Calu3 (cell line): ENCODE measurements at regions of chr14 and their contacts with region 1.

Region 1: DNA sequence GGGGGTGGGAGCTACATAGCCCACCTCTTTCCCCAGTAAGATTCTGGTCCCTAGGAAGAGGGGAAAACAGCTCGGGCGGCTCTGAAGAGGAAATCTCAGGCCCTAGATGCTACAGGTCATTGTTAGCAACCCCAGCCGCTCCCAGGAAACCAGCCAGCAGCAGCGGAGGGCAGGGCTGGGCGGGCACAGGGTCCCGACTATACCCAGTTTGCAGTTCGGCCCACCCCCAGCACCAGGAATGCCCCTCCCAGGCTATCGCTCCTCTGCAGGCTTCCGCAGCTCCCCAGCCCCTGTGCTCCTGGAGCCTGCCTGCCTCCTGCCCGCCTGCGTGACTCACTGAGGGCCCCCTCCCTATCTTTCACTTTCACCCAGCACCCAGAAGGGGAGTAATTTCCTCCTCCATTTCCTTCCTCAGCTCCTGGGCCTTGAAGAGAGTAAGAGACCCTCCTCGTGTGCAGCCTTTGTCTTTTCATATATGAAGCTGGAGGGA is 27.2 kb upstream of the PNMA1 start:
- DNase-seq: peak; percentile 83
- H3K4me3 Mint-ChIP-seq: peak overlapping the region; percentile 57
- H3K27ac Mint-ChIP-seq: peak overlapping the region; percentile 94
- H3K4me1 Mint-ChIP-seq: peaks cover 42% of the 10 kb centered on the region
- H3K27me3 Mint-ChIP-seq: no peaks in the 10 kb centered on the region
- CTCF ChIP-seq: no peak

Region 2: DNA sequence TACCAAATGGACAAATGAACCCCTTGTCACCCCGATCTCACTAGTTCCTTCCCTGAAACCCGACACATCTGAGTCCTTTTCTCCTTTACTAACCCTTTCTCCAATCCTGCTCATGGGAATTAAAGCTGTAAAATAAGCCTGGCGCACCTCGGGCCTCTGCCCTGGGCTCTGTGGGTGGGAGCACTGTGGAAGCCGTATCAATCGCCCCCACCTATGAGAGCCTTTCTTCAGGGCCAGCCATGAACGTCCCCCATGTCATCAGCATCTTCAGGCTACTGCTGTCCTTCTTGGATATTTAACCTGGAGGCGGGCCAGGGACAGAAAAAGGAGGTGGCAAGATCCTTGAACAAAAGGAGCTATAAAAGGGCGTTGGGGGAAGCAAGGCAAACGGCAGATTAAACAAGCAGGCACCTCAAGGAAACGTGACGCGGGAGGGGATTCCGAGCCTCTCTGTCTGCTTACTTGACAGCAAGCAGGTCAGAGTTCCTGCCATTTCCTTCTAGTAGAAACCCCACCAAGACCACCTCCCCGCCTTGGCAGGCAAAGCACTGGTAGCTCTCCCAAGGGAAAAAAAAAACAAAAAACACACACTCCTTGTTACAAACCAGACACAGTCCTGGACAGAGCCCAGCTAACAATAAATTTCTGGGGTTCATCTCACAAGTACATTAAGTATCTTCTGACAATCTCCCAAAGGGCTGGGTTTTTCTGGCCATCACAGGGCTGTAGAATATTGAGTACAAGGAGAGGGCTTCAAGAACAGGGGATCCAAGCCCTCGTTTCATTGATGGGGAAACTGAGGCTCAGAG is 910.4 kb before region 1 on chr14:
- CTCF ChIA-PET with region 1: no interaction called
- intact Hi-C with region 1: no loop called
- DNase-seq: no peak
- H3K4me3 Mint-ChIP-seq: no peak overlapping the region
- H3K27ac Mint-ChIP-seq: no peak overlapping the region
- H3K4me1 Mint-ChIP-seq: no peaks in the 10 kb centered on the region
- H3K27me3 Mint-ChIP-seq: peaks cover 27% of the 10 kb centered on the region
- CTCF ChIP-seq: no peak

Region 3: GRCh38 chr14:73753959-73754882 is 12.8 kb after region 1 on chr14:
- CTCF ChIA-PET with region 1: interaction called, 23 read pairs
- intact Hi-C with region 1: loop called (anchors 2 kb)
- DNase-seq: no peak
- H3K4me3 Mint-ChIP-seq: peak overlapping the region; percentile 73
- H3K27ac Mint-ChIP-seq: peak overlapping the region; percentile 91
- H3K4me1 Mint-ChIP-seq: peaks cover 72% of the 10 kb centered on the region
- H3K27me3 Mint-ChIP-seq: no peaks in the 10 kb centered on the region
- CTCF ChIP-seq: no peak

Region 4: DNA sequence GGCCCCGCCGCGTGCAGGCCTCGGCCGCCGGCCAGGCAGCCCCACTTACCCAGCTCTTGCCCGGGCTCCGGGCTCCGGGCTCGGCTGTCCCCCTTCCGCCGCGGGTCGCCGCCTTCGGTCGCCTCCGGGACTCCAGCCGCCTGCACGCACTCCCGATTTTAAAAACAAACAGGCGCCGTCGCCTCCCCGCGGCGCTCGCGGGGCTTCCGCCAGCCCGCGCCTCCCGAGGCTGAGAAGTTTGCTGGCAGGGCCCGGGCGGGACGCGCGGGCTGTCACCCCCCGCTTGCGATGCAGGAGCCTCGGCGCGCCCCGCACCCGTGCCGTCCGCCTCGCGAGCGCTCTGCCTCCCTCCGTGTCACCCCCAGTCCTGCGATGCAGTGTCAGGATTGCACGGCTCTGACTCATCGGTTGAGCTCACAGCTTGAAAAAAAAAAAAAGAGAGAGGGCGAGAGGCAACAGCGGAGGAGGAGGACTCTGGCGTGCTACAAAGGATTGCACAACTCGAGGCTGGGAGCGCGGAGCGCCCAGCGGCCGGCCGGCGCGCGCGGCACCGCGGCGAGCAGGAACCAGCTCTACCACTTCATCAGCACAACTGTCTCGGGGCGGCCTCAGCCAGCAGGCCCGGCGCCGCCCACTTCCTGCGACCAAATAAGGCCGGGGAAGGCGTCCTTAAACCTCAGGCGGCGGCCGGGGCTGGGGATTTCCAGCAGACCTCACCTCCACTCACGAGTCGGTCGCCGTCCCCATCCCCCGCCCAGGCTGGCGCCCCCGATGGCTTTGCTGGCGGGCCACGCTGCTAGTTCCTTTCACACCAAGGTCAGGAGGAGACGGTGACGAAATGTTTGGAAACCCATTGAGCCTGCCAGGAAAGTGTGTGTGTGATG is 18.5 kb after region 1 on chr14:
- CTCF ChIA-PET with region 1: interaction called, 23 read pairs
- intact Hi-C with region 1: loop called (anchors 2 kb)
- DNase-seq: peak; percentile 97
- H3K4me3 Mint-ChIP-seq: peak overlapping the region; percentile 73
- H3K27ac Mint-ChIP-seq: peak overlapping the region; percentile 94
- H3K4me1 Mint-ChIP-seq: peaks cover 76% of the 10 kb centered on the region
- H3K27me3 Mint-ChIP-seq: no peaks in the 10 kb centered on the region
- CTCF ChIP-seq: no peak

Region 5: GRCh38 chr14:73795972-73796371 is 54.5 kb after region 1 on chr14:
- CTCF ChIA-PET with region 1: no interaction called
- intact Hi-C with region 1: no loop called
- DNase-seq: peak; percentile 82
- H3K4me3 Mint-ChIP-seq: no peak overlapping the region
- H3K27ac Mint-ChIP-seq: no peak overlapping the region
- H3K4me1 Mint-ChIP-seq: peaks cover 32% of the 10 kb centered on the region
- H3K27me3 Mint-ChIP-seq: no peaks in the 10 kb centered on the region
- CTCF ChIP-seq: no peak

Region 6: DNA sequence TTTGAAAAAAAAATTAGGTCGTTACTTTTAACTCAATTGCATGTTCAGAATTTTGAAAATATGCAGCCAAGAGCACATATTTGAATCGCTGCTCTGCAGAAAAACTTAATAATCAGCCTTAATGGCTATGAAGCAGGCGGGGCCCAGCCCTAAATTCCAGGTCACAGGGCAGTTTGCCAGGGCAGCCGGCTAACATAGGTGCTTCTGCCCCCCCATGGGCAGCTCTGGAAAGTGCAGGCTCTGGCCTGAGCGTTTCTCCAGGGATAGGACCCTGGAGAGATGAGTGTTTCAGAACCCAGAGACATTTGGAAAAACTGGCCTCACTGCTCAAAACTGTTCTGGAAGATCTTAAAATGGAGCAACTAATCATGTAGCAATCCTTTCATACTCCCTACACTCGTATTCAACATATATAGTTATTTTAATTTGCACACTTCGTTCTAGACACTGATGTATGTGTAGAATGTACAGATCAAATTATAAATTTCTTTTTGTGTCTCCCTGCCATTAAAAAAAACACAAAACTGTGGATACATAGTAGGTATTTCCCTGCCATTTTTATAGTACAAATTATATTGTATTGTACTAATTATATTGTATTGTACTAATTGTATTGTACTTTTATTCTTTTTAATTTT is 84.2 kb after region 1 on chr14:
- CTCF ChIA-PET with region 1: interaction called, 8 read pairs
- intact Hi-C with region 1: loop called (anchors 5 kb)
- DNase-seq: peak; percentile 89
- H3K4me3 Mint-ChIP-seq: no peak overlapping the region
- H3K27ac Mint-ChIP-seq: no peak overlapping the region
- H3K4me1 Mint-ChIP-seq: peaks cover 11% of the 10 kb centered on the region
- H3K27me3 Mint-ChIP-seq: no peaks in the 10 kb centered on the region
- CTCF ChIP-seq: peak; percentile 77

Region 7: GRCh38 chr14:73935666-73936065 is 194.2 kb after region 1 on chr14:
- CTCF ChIA-PET with region 1: no interaction called
- intact Hi-C with region 1: no loop called
- DNase-seq: no peak
- H3K4me3 Mint-ChIP-seq: no peak overlapping the region
- H3K27ac Mint-ChIP-seq: no peak overlapping the region
- H3K4me1 Mint-ChIP-seq: no peaks in the 10 kb centered on the region
- H3K27me3 Mint-ChIP-seq: no peaks in the 10 kb centered on the region
- CTCF ChIP-seq: peak; percentile 28